CD8-positive, alpha-beta T cell (primary cell): ENCODE measurements at regions of chr18 and their contacts with region 1.

Region 1: GRCh38 chr18:67425724-67426123 is 90.8 kb downstream of the DSEL start:
- DNase-seq: no peak
- ATAC-seq: no peak
- H3K4me3 ChIP-seq: no peak overlapping the region
- H3K4me3 Mint-ChIP-seq: no peak overlapping the region
- H3K27ac ChIP-seq: no peak overlapping the region
- H3K27ac Mint-ChIP-seq: no peak overlapping the region
- H3K4me1 ChIP-seq: no peaks in the 10 kb centered on the region
- H3K4me1 Mint-ChIP-seq: no peaks in the 10 kb centered on the region
- H3K27me3 ChIP-seq: no peaks in the 10 kb centered on the region
- H3K27me3 Mint-ChIP-seq: no peaks in the 10 kb centered on the region
- CTCF ChIP-seq: no peak

Region 2: GRCh38 chr18:67217551-67218166 is 208.1 kb before region 1 on chr18:
- CTCF ChIA-PET with region 1: no interaction called
- POLR2A ChIA-PET with region 1: no interaction called
- intact Hi-C with region 1: no loop called
- DNase-seq: peak; percentile 6 to 76 (median 56)
- ATAC-seq: peak; percentile 93
- H3K4me3 ChIP-seq: no peak overlapping the region
- H3K4me3 Mint-ChIP-seq: no peak overlapping the region
- H3K27ac ChIP-seq: no peak overlapping the region
- H3K27ac Mint-ChIP-seq: no peak overlapping the region
- H3K4me1 ChIP-seq: no peaks in the 10 kb centered on the region
- H3K4me1 Mint-ChIP-seq: no peaks in the 10 kb centered on the region
- H3K27me3 ChIP-seq: no peaks in the 10 kb centered on the region
- H3K27me3 Mint-ChIP-seq: no peaks in the 10 kb centered on the region
- CTCF ChIP-seq: peak; percentile 88

Region 3: GRCh38 chr18:67232406-67232805 is 193.3 kb before region 1 on chr18:
- CTCF ChIA-PET with region 1: no interaction called
- POLR2A ChIA-PET with region 1: no interaction called
- intact Hi-C with region 1: no loop called
- DNase-seq: no peak
- ATAC-seq: no peak
- H3K4me3 ChIP-seq: no peak overlapping the region
- H3K4me3 Mint-ChIP-seq: no peak overlapping the region
- H3K27ac ChIP-seq: no peak overlapping the region
- H3K27ac Mint-ChIP-seq: no peak overlapping the region
- H3K4me1 ChIP-seq: no peaks in the 10 kb centered on the region
- H3K4me1 Mint-ChIP-seq: no peaks in the 10 kb centered on the region
- H3K27me3 ChIP-seq: no peaks in the 10 kb centered on the region
- H3K27me3 Mint-ChIP-seq: no peaks in the 10 kb centered on the region
- CTCF ChIP-seq: no peak

Region 4: DNA sequence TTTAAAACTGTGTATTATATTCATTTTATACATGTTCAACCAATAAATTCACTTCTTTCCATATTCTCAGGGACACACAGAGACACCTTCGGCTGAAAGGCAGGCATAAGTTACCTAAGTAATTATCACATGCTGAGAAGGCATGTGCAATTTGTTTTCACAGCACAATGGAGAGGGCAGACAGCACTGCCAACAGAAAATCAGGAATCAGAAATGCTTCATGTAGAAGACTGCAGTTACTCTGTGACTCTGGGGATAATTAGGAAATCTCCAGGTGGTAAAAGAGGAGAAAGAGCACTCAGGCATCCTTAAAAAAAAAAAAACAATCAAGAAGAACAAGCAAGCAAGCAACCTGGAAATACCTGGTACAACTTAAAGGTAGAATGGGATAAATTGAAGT is 41.5 kb after region 1 on chr18:
- CTCF ChIA-PET with region 1: no interaction called
- POLR2A ChIA-PET with region 1: no interaction called
- intact Hi-C with region 1: loop called in 1 of 2 experiments (anchors 1 kb)
- DNase-seq: no peak
- ATAC-seq: no peak
- H3K4me3 ChIP-seq: no peak overlapping the region
- H3K4me3 Mint-ChIP-seq: no peak overlapping the region
- H3K27ac ChIP-seq: no peak overlapping the region
- H3K27ac Mint-ChIP-seq: no peak overlapping the region
- H3K4me1 ChIP-seq: peaks cover 5% of the 10 kb centered on the region
- H3K4me1 Mint-ChIP-seq: peaks cover 5% of the 10 kb centered on the region
- H3K27me3 ChIP-seq: no peaks in the 10 kb centered on the region
- H3K27me3 Mint-ChIP-seq: peaks cover 5% of the 10 kb centered on the region
- CTCF ChIP-seq: no peak